ENCODE measurements at regions of chr1 and their contacts with region 1.

Region 1: GRCh38 chr1:115679141-115679611 is 37.4 kb downstream of the VANGL1 start:
- DNase-seq: no peak
- H3K4me3 Mint-ChIP-seq: no peak overlapping the region
- H3K27ac Mint-ChIP-seq: no peak overlapping the region
- H3K4me1 Mint-ChIP-seq: no peaks in the 10 kb centered on the region
- H3K27me3 Mint-ChIP-seq: no peaks in the 10 kb centered on the region

Region 2: DNA sequence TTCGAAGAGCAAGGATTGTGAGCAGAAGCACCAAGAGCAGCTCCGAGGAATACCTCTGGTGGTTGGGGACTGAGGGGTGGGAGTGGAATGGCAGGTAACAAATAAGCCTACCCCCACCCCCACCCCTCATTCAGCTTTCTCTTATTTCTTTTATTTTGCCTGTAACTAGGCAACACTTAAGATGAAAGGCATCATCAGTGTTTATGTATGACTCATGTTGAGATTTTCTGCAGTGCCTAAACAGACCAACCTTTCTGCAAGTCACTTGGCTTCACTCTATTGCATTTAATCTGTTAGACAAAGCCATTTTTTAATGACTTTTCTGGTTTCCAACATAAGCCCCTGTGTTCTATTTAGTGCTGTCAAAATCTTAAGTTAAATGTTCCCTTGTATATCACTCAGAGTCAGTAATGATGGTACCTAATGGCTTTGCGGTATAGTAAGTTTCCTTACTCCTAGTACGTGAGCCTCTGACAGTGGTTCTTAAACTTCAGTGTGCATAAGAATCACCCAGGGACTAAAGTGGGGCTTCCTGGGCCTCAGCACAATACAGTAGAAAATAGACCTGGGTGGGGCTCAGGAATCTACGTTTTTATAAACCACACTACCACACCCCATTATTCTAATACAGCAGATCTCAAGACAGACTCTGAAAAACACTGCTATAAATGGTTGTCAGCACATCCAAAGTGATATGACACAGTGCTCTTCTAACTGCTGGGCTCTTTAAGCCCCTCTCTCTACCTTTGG is 69.4 kb after region 1 on chr1:
- CTCF ChIA-PET with region 1: no interaction called
- POLR2A ChIA-PET with region 1: no interaction called
- intact Hi-C with region 1: loop called (anchors 10 kb)
- DNase-seq: no peak
- H3K4me3 Mint-ChIP-seq: no peak overlapping the region
- H3K27ac Mint-ChIP-seq: no peak overlapping the region
- H3K4me1 Mint-ChIP-seq: no peaks in the 10 kb centered on the region
- H3K27me3 Mint-ChIP-seq: peaks cover 19% of the 10 kb centered on the region

Measured in activated CD4-positive, alpha-beta memory T cell treated with anti-CD3 and anti-CD28 coated beads for 36 hours (primary cell).